Ascending aorta (tissue), 2 donors: ENCODE measurements at regions of chr16 and their contacts with region 1.

Region 1: DNA sequence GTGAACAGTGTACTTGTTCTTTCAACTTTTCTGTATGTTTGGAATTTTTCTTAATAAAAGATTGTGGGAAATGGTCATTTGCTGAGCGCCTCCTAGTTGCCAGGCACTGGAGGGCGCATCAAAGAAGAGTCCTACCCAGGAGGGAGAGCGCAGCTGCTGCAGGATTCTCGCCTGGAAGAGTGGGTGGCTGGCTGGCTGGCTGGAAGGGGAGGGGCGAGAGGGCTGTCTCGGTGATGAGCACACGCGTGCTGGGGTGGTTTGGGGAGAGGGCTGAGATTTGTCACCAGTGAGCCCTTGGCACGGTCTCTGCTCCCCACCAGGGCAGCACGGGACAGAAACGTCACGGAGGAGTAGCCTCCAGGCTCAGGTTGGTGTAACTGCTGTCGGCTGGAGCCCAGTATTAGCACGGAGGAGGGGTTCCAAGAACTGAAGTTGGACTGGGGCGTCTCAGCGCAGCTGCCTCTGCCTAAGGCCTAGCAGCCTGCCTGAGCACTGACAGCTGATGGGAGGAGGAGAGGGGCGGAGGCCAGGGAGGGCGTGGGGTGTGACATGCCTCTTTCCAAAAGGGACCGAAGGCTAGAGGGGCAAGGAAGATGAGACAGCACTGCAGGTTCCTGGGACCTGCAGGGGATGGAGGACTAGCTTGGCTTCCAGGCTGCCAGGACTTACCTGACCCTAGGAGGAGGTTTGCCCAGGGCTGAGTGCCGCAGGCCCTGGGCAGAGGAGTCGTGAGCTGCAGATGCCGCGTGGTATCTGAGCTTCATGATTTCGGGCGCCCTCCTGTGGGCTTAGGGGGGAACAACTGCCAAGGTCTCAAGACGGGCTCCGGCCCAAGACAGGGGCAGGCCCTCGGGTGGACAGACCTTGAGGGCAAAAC is 5.7 kb downstream of the LDHD start:
- DNase-seq: peak; percentile 69 to 95
- H3K4me3 ChIP-seq: peak overlapping the region in 1 of 2 donors; percentile 47
- H3K27ac ChIP-seq: peak overlapping the region; percentile 72 to 83
- H3K4me1 ChIP-seq: peaks cover 8 to 39% of the 10 kb centered on the region in 2 donors
- H3K27me3 ChIP-seq: no peaks in the 10 kb centered on the region
- CTCF ChIP-seq: peak; percentile 88 to 91 (median 90)

Region 2: DNA sequence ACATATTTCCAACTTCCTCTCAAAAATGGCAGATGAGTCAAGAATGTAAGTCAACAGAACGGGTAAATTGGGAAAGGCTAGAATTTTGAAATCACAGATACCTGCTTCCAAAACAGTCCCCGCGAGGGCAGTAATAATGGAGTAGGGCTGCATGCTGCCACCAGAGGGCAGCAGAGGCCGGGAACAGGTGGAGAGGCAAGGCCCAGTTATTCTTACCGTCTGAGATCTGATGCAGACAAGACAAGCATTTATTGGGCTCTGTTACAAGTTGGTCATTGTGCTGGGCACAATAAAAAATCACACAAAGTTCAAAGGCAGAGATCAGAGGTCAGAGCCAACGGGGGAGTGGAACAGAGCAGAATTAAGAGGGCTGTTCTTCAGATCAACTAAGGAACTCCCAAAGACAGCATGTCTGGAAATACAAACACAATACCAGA is 401.4 kb before region 1 on chr16:
- intact Hi-C with region 1: loop called (anchors 10 kb)
- DNase-seq: peak in 1 of 2 donors; percentile 81
- H3K4me3 ChIP-seq: no peak overlapping the region
- H3K27ac ChIP-seq: no peak overlapping the region
- H3K4me1 ChIP-seq: no peaks in the 10 kb centered on the region
- H3K27me3 ChIP-seq: no peaks in the 10 kb centered on the region
- CTCF ChIP-seq: peak; percentile 82 to 95 (median 93)

Region 3: GRCh38 chr16:75044800-75045430 is 66.0 kb before region 1 on chr16:
- intact Hi-C with region 1: loop called (anchors 5 kb)
- DNase-seq: peak in 1 of 2 donors; percentile 85
- H3K4me3 ChIP-seq: no peak overlapping the region
- H3K27ac ChIP-seq: peak overlapping the region; percentile 54 to 72
- H3K4me1 ChIP-seq: peaks cover 13 to 31% of the 10 kb centered on the region in 2 donors
- H3K27me3 ChIP-seq: no peaks in the 10 kb centered on the region
- CTCF ChIP-seq: no peak